ENCODE measurements at regions of chr16 and their contacts with region 1.

Region 1: DNA sequence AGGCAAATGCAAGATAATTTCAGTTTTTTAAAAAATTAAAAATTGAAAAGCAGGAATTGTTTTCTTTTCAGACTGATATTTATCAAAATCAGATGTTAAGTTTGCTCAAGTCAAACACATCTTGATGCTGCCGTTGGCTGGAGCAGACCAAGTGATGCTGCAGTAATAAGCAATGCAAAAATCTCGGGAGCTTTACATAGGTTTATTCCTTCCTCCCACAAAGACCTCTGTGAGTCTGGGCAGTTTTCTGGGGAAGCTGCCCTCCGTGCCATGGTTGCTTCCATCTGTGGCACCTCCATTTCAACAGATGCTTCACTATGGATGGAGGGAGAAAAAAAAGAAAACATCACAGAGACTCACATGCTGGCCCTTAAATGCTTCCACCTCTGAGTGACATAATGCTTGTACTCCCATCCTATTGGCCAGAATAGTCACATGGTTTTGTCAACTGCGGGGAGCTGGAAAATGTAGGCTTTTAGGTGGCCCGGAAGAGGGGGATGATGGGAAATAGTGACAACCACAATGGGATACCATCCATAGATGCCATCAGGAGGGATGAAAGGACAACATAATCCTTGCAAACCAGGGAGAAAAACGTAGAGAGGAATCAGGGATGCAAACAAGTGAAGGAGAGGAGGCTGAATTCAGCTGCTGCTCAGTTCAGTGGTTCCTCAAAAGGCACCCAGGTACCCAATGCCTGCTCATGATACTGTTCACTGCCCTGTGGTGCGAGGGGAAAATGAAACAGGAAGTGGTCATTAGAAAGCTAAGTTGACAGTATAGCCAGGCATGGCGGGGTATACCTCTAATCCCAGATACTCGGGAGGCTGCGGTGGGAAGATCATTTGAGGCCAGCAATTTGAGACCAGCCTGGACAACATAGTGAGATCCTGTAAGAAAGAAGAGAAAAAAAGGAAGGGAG is 13.5 kb upstream of the ERCC4 start:
- DNase-seq: no peak

Region 2: DNA sequence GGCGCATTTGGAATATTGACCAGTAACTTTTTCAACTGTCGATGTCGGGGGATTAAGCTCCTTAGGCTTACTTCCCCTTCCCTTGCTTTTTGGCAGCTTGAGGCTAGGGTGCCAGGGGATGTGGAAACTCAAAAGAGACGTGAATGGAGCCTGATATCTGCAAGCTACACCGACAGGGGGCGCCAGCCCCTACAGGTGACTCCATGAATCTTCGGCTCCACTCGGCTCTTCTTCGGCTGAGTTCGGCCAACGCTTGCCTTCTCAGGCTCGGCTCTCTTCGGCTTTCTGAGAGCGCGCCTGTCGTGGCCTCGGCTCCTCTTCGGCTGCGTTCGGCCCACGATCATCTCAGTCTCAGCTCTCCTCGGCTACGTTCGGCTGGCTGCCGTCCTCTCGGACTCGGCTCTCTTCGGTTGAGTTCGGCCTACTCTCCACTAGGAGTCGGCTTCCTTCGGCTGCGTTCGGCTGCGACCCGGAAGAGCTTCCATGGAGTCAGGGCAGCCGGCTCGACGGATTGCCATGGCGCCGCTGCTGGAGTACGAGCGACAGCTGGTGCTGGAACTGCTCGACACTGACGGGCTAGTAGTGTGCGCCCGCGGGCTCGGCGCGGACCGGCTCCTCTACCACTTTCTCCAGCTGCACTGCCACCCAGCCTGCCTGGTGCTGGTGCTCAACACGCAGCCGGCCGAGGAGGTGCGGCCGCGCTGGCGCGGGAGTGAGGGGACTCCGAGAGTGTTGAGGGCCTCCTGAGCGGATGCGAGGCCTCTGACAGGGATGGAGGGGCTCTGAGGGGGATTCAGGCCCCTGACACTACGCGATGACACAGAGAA is 13.5 kb after region 1 on chr16 and contains the start of gene ERCC4:
- CTCF ChIA-PET with region 1: interaction called, 10 read pairs
- POLR2A ChIA-PET with region 1: interaction called, 6 read pairs
- DNase-seq: peak; percentile 98

Measured in HEK293T (cell line).